Astrocyte of the cerebellum (primary cell): ENCODE measurements at regions of chr16 and their contacts with region 1.

Region 1: DNA sequence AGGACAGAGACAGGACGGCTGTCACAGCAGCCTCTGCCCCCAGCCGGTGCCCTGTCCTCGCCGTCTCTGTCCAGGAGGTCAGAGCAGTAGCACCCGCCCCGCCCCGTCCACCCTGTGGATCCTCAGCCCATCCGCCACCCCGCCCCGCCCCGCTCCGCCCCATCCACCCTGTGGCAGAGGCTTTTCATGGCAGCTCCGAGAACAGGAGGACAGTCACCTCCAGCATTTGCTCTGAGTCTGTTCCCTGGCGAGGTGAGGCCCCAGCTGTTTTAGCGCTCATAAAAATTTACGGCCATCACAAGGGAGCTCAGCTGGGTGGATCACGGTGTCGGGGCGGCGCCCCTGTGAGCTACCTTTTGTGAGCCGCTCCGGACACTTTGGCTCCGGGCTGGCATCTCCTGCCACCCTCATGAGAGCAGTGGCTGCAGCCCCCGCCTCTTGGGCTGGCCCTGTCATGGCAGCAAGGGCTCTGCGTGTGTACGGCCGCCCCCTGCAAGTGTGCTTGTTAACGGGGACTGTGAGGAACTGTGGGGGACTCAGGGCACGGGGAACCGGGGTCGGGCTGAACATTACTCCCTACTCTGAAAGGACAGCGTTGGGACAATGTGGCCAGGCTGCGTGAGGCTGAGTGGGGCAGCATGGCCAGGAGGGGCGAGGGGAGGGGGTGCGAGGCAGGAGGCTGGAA is 32.3 kb upstream of the GNG13 start:
- DNase-seq: no peak
- H3K4me3 ChIP-seq: no peak overlapping the region
- CTCF ChIP-seq: no peak

Region 2: DNA sequence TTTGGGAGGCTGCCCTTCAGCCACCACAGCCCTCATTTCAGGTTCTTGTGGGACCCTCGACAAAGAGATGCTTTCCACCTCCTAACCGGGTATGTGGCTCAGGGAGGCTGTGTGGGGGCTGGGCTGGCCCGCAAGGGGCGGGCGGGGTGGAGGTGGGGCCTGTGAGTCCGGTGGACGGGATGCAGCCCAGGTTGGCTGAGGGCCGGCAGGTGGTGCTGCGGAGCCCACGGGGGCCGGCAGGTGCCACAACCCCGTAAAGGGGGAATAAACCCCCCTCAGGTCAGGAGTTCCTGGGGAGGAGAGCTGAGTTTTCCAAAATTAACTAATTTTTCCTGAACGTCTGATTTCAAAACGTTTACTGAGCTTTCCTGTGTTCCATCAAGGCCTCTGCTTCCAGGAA is 87.1 kb before region 1 on chr16:
- in situ Hi-C with region 1: no loop called
- DNase-seq: no peak
- H3K4me3 ChIP-seq: no peak overlapping the region
- CTCF ChIP-seq: peak; percentile 20

Region 3: GRCh38 chr16:782766-783403 is 49.9 kb before region 1 on chr16:
- in situ Hi-C with region 1: no loop called
- DNase-seq: no peak
- H3K4me3 ChIP-seq: no peak overlapping the region
- CTCF ChIP-seq: no peak

Region 4: GRCh38 chr16:877242-877990 is 44.6 kb after region 1 on chr16:
- in situ Hi-C with region 1: no loop called
- DNase-seq: no peak
- H3K4me3 ChIP-seq: no peak overlapping the region
- CTCF ChIP-seq: no peak

Region 5: DNA sequence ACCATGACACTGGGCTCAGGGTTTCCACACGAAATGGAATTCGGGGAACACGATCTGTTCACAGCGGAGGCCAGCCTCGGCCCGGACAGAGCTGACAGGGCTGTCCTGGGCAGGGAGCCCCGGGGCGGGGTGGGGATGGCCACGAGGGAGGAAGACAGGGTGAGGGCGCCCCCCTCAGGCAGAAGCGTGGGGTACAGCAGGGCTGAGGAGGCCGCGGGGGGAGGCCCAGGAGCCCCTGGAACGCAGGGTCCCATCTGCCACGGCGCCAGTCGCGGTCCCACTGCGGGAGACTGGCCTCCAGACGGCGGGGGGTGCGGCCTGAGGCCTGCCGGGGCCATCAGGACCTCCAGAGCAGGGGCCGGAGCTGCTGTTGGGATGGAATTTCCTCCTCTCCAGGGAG is 62.0 kb after region 1 on chr16:
- in situ Hi-C with region 1: loop called (anchors 10 kb)
- DNase-seq: no peak
- H3K4me3 ChIP-seq: no peak overlapping the region
- CTCF ChIP-seq: no peak

Region 6: GRCh38 chr16:907842-908241 is 75.0 kb after region 1 on chr16:
- in situ Hi-C with region 1: no loop called
- DNase-seq: no peak
- H3K4me3 ChIP-seq: no peak overlapping the region
- CTCF ChIP-seq: no peak

Region 7: DNA sequence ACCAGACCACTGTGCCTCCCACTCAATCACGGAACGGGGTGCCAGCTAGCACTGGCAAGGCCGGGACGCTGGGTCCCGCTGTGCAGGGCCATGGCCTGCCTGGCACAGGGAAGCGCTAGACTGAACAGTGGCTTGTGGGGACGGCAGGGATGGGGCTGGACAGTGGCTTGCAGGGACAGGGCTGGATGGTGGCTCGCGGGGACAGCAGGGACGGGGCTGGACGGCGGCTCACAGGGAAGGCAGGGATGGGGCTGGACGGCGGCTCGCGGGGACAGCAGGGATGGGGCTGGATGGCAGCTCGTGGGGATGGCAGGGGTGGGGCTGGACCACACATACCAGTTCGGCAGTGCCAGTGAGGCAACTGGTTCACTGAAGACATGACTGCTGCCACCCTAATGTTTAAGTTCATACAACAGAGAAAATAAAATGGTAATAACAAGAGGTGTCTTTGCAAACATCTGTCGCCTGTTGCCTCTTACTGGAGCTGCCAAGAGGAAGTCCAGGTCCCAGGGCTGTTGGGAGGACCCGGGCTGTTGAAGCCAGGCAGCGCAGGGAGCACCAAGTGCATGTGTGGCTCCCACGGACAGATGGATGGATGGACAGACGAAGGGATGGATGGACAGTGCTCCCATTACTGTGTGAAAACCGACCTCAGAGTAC is 105.5 kb after region 1 on chr16:
- in situ Hi-C with region 1: loop called (anchors 5 kb)
- DNase-seq: no peak
- H3K4me3 ChIP-seq: no peak overlapping the region
- CTCF ChIP-seq: no peak